ENCODE measurements at regions of chrX and their contacts with region 1.

Region 1: GRCh38 chrX:20378291-20378920 is 111.7 kb upstream of the RPS6KA3 start:
- DNase-seq: no peak
- ATAC-seq: no peak
- H3K4me3 ChIP-seq: no peak overlapping the region
- H3K4me3 Mint-ChIP-seq: no peak overlapping the region
- H3K27ac ChIP-seq: no peak overlapping the region
- H3K27ac Mint-ChIP-seq: no peak overlapping the region
- H3K4me1 ChIP-seq: peaks cover 13 to 20% of the 10 kb centered on the region in 2 donors
- H3K4me1 Mint-ChIP-seq: peaks cover 19% of the 10 kb centered on the region
- H3K27me3 ChIP-seq: no peaks in the 10 kb centered on the region
- H3K27me3 Mint-ChIP-seq: no peaks in the 10 kb centered on the region
- CTCF ChIP-seq: no peak

Region 2: GRCh38 chrX:20252381-20253231 is 125.8 kb before region 1 on chrX:
- CTCF ChIA-PET with region 1: no interaction called
- POLR2A ChIA-PET with region 1: no interaction called
- intact Hi-C with region 1: loop called (anchors 5 kb)
- DNase-seq: peak; percentile 66
- ATAC-seq: peak; percentile 64
- H3K4me3 ChIP-seq: no peak overlapping the region
- H3K4me3 Mint-ChIP-seq: no peak overlapping the region
- H3K27ac ChIP-seq: no peak overlapping the region
- H3K27ac Mint-ChIP-seq: no peak overlapping the region
- H3K4me1 ChIP-seq: peaks cover 3 to 13% of the 10 kb centered on the region in 2 donors
- H3K4me1 Mint-ChIP-seq: peaks cover 41% of the 10 kb centered on the region
- H3K27me3 ChIP-seq: no peaks in the 10 kb centered on the region
- H3K27me3 Mint-ChIP-seq: no peaks in the 10 kb centered on the region
- CTCF ChIP-seq: peak; percentile 49

Region 3: GRCh38 chrX:20320461-20321159 is 57.8 kb before region 1 on chrX:
- CTCF ChIA-PET with region 1: no interaction called
- POLR2A ChIA-PET with region 1: no interaction called
- intact Hi-C with region 1: loop called (anchors 2 kb)
- DNase-seq: peak; percentile 74
- ATAC-seq: peak; percentile 96
- H3K4me3 ChIP-seq: peak overlapping the region in 1 of 5 experiments; percentile 30
- H3K4me3 Mint-ChIP-seq: peak overlapping the region; percentile 66
- H3K27ac ChIP-seq: peak overlapping the region; percentile 46 to 64
- H3K27ac Mint-ChIP-seq: peak overlapping the region; percentile 76
- H3K4me1 ChIP-seq: peaks cover 24 to 31% of the 10 kb centered on the region in 2 donors
- H3K4me1 Mint-ChIP-seq: peaks cover 43% of the 10 kb centered on the region
- H3K27me3 ChIP-seq: no peaks in the 10 kb centered on the region
- H3K27me3 Mint-ChIP-seq: no peaks in the 10 kb centered on the region
- CTCF ChIP-seq: no peak

Region 4: DNA sequence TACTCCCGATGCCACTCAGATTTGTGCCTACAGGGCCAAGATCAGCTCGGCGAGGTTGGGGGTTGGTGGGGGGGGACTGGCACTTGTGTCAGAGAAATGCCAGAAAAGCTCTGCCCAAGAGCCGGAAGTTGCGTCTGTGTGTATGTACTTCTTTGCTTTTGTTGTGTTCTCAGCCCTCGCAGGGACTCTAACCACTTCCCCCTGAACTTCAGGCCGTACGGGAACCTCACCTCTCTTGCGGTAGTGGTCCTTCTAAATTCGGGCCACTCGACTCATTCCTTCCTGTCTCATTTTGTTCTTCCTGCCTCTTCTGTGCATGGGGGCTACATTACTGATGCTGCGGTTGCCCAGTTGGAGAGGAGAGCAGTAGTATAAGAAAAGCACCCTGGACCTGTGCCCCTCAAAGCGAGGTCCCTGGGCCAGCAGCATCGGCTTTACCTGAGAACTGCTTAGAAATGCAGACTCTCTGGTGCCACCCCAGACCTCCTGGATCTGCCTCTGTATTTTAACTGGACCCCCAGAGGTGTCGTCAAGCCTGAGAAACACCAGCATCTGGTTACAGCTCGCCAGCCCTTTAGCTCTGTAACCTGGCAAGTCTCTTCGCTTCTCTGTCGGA is 34.6 kb after region 1 on chrX:
- CTCF ChIA-PET with region 1: no interaction called
- POLR2A ChIA-PET with region 1: interaction called, 6 read pairs
- intact Hi-C with region 1: loop called (anchors 5 kb)
- DNase-seq: peak; percentile 68
- ATAC-seq: peak; percentile 80
- H3K4me3 ChIP-seq: peak overlapping the region in 2 of 5 experiments; percentile 3 to 25
- H3K4me3 Mint-ChIP-seq: peak overlapping the region; percentile 74
- H3K27ac ChIP-seq: peak overlapping the region; percentile 62 to 79
- H3K27ac Mint-ChIP-seq: peak overlapping the region; percentile 83
- H3K4me1 ChIP-seq: peaks cover 19 to 22% of the 10 kb centered on the region in 2 donors
- H3K4me1 Mint-ChIP-seq: peaks cover 24% of the 10 kb centered on the region
- H3K27me3 ChIP-seq: no peaks in the 10 kb centered on the region
- H3K27me3 Mint-ChIP-seq: no peaks in the 10 kb centered on the region
- CTCF ChIP-seq: no peak

Measured in B cell (primary cell).